ENCODE measurements at regions of chr14 and their contacts with region 1.

Region 1: GRCh38 chr14:54572316-54572715 is 5.4 kb downstream of the SAMD4A start:
- DNase-seq: no peak
- H3K4me3 ChIP-seq: no peak overlapping the region
- H3K27ac ChIP-seq: no peak overlapping the region
- H3K4me1 ChIP-seq: peaks cover 0 to 13% of the 10 kb centered on the region in 2 donors
- H3K27me3 ChIP-seq: no peaks in the 10 kb centered on the region
- CTCF ChIP-seq: peak in 4 of 6 experiments; percentile 10 to 30 (median 26)
- POLR2A ChIP-seq: no peak

Region 2: DNA sequence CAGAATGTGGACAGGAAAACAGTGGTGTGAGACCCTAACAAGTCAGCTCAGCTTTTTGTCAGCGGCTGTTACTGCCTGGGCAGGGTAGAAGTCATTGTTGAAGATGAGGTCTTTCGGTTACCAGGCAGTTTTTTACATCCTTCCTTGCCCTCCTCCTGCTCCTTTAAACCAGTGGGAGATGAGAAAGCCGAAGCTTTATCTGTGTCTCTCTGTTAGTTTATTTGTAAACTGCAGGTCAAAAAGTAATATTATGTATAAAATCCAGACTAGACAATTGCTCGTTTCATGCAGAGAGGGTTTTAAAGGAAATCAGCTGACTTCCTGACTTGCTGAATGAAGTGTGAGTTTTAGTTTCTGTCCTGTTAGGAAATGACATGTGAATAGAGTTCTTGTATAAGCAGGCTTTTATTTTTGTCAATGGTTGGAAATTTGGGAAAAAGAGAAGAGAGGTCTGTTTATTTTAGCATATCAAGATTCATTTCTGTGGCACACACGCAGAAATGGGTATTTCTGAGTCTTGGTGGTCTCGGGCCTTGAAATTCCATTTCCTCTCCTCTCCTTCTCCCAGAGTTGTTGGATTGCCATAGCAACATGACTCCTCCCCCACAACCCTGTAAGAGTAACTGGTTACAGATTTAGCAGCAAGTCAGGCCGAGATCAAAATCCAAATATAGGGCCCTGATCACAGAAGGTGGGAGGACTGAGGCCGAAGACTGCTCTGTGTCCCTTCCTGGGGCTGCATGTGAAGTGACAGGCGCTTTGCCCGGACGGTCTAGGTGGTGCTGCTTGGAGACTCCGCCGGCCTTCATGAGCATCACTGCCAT is 55.4 kb after region 1 on chr14:
- intact Hi-C with region 1: loop called in 1 of 2 experiments (anchors 10 kb)
- DNase-seq: peak in 3 of 7 donors; percentile 28 to 40 (median 29)
- H3K4me3 ChIP-seq: peak overlapping the region in 1 of 4 donors; percentile 17
- H3K27ac ChIP-seq: peak overlapping the region in 4 of 5 donors; percentile 26 to 84 (median 72)
- H3K4me1 ChIP-seq: peaks cover 0 to 16% of the 10 kb centered on the region in 2 donors
- H3K27me3 ChIP-seq: no peaks in the 10 kb centered on the region
- CTCF ChIP-seq: no peak
- POLR2A ChIP-seq: no peak

Region 3: GRCh38 chr14:54642801-54643697 is 70.7 kb after region 1 on chr14:
- intact Hi-C with region 1: loop called in 1 of 2 experiments (anchors 10 kb)
- DNase-seq: no peak
- H3K4me3 ChIP-seq: no peak overlapping the region
- H3K27ac ChIP-seq: no peak overlapping the region
- H3K4me1 ChIP-seq: no peaks in the 10 kb centered on the region
- H3K27me3 ChIP-seq: no peaks in the 10 kb centered on the region
- CTCF ChIP-seq: peak in 4 of 6 experiments; percentile 15 to 27 (median 19)
- POLR2A ChIP-seq: no peak

Region 4: DNA sequence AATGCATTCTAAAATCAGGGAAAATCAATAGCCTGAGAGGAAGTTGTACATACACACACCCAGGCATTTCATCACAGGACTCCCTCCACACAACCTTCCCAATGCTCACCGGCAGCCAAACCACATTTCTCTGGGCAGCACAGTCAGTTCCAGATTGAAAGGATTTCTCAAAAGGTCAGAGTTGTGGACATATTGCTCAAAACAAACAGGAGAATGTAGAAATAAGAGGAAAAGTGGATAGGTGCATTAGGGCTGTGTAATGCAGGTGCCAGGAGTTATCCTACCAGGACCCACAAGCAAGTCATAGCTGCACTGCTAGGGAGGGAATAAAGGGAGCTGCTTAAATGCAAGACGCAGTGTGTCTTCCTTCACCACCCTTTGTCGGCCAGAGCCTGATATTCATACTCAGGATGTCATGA is 267.4 kb after region 1 on chr14:
- intact Hi-C with region 1: no loop called
- DNase-seq: no peak
- H3K4me3 ChIP-seq: no peak overlapping the region
- H3K27ac ChIP-seq: peak overlapping the region in 1 of 5 donors; percentile 15
- H3K4me1 ChIP-seq: no peaks in the 10 kb centered on the region
- H3K27me3 ChIP-seq: no peaks in the 10 kb centered on the region
- CTCF ChIP-seq: no peak
- POLR2A ChIP-seq: no peak

Measured in adrenal gland (tissue), 19 donors.